CD4-positive, alpha-beta T cell (primary cell): ENCODE measurements at regions of chr14 and their contacts with region 1.

Region 1: DNA sequence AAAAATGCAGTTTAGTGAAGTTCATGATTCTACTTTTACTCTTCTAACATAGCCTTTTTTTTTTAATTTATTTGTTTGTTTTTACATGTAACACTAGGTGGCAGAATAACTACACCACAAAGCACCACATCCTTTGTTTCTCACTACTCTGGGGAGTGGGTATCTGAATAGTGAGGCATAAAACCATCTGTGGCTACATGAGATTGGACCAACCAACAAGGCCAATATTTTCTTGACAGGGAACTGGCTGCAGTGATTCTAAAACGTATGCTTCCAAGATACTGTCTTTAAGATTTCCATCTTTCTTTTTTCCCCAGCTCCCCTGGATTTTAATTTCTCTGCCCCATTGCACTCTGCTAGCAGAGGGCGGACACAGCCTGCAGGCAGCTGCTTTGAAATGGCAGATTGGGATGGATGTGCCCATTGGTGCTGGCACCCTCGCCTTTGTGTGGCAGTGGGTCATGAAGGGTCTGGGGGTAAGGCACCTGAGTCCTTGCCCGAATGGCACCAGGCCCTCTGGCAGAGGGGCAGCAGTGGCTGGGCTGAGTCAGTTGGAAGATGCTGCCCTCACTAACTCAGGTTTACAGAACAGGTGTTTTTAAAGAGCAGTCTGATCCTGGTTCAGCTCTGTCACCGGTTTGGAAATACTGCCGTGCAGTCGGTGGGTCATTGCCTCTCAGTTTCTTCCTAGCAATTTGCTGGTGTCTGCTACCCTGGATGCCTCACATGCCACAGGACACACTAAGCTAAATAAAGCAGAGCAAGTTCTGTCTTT is 429.1 kb downstream of the RAD51B start:
- DNase-seq: peak in 5 of 14 experiments; percentile 1 to 79 (median 69)
- ATAC-seq: peak; percentile 83
- H3K4me3 ChIP-seq: no peak overlapping the region
- H3K4me3 Mint-ChIP-seq: no peak overlapping the region
- H3K27ac ChIP-seq: no peak overlapping the region
- H3K27ac Mint-ChIP-seq: peak overlapping the region; percentile 67
- H3K4me1 ChIP-seq: peaks cover 6% of the 10 kb centered on the region
- H3K4me1 Mint-ChIP-seq: peaks cover 52% of the 10 kb centered on the region
- H3K27me3 ChIP-seq: no peaks in the 10 kb centered on the region
- H3K27me3 Mint-ChIP-seq: no peaks in the 10 kb centered on the region
- CTCF ChIP-seq: peak; percentile 77

Region 2: DNA sequence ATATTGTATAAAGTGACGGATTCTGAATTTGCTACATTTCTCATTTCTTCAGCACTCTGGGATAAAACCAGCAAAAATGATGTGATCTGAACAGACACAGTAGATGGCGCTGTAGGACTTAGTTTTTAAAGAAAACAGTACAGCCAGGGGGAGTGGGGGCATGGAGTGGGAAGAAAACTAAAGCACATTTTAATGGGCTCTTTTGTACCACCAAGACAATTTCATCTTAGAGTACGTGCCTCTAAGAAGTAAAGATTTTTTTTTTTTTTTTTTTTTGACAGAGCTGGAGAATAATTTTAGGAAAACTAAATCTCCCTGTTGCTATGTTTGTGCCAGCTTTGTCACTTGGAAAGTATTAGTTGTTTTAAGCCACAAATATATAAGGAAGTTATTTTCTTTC is 304.7 kb before region 1 on chr14:
- CTCF ChIA-PET with region 1: no interaction called
- POLR2A ChIA-PET with region 1: no interaction called
- intact Hi-C with region 1: loop called (anchors 5 kb)
- DNase-seq: peak in 11 of 14 experiments; percentile 7 to 78 (median 40)
- ATAC-seq: peak; percentile 66
- H3K4me3 ChIP-seq: no peak overlapping the region
- H3K4me3 Mint-ChIP-seq: no peak overlapping the region
- H3K27ac ChIP-seq: no peak overlapping the region
- H3K27ac Mint-ChIP-seq: no peak overlapping the region
- H3K4me1 ChIP-seq: no peaks in the 10 kb centered on the region
- H3K4me1 Mint-ChIP-seq: no peaks in the 10 kb centered on the region
- H3K27me3 ChIP-seq: no peaks in the 10 kb centered on the region
- H3K27me3 Mint-ChIP-seq: no peaks in the 10 kb centered on the region
- CTCF ChIP-seq: peak; percentile 70

Region 3: GRCh38 chr14:68359837-68360552 is 111.3 kb after region 1 on chr14:
- CTCF ChIA-PET with region 1: no interaction called
- POLR2A ChIA-PET with region 1: no interaction called
- intact Hi-C with region 1: loop called in 1 of 2 experiments (anchors 5 kb)
- DNase-seq: peak in 1 of 14 experiments; percentile 37
- ATAC-seq: no peak
- H3K4me3 ChIP-seq: no peak overlapping the region
- H3K4me3 Mint-ChIP-seq: no peak overlapping the region
- H3K27ac ChIP-seq: no peak overlapping the region
- H3K27ac Mint-ChIP-seq: peak overlapping the region; percentile 68
- H3K4me1 ChIP-seq: peaks cover 18% of the 10 kb centered on the region
- H3K4me1 Mint-ChIP-seq: peaks cover 45% of the 10 kb centered on the region
- H3K27me3 ChIP-seq: no peaks in the 10 kb centered on the region
- H3K27me3 Mint-ChIP-seq: no peaks in the 10 kb centered on the region
- CTCF ChIP-seq: no peak

Region 4: DNA sequence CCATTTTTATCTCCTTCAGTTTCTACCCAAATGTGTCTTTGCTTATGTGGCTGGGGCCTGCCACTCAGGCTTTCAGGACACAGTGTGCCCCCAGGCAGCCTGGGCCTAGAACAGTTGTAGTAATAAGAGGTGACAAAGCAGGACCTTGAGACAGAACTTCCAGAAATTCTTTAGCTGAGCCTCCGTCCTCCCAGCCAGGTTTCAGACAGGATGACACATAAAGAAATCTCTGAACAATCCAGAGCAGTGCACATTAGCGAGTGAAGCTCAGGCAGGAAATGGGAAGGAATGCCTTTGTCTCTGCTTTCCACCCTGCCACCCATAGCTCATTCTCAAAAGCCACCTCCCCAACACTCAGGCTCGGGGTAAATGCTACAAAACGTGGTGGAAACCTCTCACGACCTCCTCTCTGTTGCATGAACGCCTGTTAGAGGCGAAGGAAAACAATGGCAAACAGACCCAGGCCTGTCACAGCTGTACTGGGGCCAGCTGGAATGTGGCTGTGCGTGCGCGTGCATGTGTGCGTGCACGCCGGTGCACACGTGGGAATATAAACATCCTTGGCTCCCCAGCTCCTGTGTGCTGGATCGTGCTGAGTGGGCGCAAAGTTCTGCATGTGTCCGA is 257.5 kb after region 1 on chr14:
- CTCF ChIA-PET with region 1: interaction called, 3 read pairs
- POLR2A ChIA-PET with region 1: interaction called, 10 read pairs
- intact Hi-C with region 1: loop called (anchors 5 to 10 kb)
- DNase-seq: peak in 2 of 14 experiments; percentile 25 to 45
- ATAC-seq: no peak
- H3K4me3 ChIP-seq: peak overlapping the region; percentile 20
- H3K4me3 Mint-ChIP-seq: peak overlapping the region; percentile 50
- H3K27ac ChIP-seq: peak overlapping the region; percentile 64 to 90
- H3K27ac Mint-ChIP-seq: peak overlapping the region; percentile 95
- H3K4me1 ChIP-seq: peaks cover 64% of the 10 kb centered on the region
- H3K4me1 Mint-ChIP-seq: peaks cover 82% of the 10 kb centered on the region
- H3K27me3 ChIP-seq: no peaks in the 10 kb centered on the region
- H3K27me3 Mint-ChIP-seq: no peaks in the 10 kb centered on the region
- CTCF ChIP-seq: no peak

Region 5: DNA sequence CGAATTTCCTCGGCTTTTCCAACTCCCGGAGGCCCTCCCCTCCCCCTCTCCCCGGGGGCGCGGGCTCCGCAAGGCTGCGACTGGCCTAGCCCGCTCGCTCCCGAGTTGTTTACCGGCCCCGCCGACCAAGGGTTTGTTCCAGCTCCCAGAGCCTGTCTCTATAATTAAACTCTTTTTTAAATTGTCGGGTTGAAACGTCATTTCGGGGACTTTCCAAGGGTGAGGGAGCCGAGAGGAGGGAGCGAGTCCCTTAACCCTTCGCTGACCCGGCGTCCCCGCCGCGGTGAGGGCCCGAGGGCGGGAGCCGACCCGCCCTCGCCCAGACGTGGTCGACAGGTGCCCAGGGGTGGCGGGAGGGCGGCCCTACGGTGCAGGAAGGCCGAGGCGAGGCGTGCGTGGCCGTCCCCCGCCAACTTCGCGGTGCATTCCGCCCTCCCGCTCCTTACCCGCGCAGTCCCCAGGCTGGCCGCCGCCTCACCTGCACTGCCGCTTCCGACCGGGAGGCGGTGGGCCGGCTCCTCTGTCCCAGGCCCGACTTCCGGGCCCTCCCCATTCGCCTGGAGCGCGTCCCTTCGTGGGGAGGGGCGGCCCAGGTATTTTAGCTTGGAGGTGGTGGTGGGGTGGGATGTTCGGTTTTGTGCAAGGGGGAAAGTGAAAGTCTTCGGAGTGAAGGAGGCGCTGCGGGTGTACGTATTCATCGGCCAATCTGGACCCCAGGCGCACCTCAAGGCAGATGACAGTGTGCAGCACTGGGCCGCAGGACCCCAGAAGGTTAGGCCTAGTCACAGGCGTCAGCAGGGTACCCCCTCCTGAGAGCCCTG is 547.1 kb after region 1 on chr14:
- CTCF ChIA-PET with region 1: interaction called, 21 read pairs
- POLR2A ChIA-PET with region 1: interaction called, 157 read pairs
- intact Hi-C with region 1: no loop called
- DNase-seq: peak; percentile 66 to 95 (median 80)
- ATAC-seq: peak; percentile 43
- H3K4me3 ChIP-seq: peak overlapping the region; percentile 98
- H3K4me3 Mint-ChIP-seq: peak overlapping the region; percentile 92
- H3K27ac ChIP-seq: peak overlapping the region; percentile 100
- H3K27ac Mint-ChIP-seq: peak overlapping the region; percentile 99
- H3K4me1 ChIP-seq: peaks cover 29% of the 10 kb centered on the region
- H3K4me1 Mint-ChIP-seq: peaks cover 49% of the 10 kb centered on the region
- H3K27me3 ChIP-seq: no peaks in the 10 kb centered on the region
- H3K27me3 Mint-ChIP-seq: no peaks in the 10 kb centered on the region
- CTCF ChIP-seq: peak; percentile 77

Region 6: DNA sequence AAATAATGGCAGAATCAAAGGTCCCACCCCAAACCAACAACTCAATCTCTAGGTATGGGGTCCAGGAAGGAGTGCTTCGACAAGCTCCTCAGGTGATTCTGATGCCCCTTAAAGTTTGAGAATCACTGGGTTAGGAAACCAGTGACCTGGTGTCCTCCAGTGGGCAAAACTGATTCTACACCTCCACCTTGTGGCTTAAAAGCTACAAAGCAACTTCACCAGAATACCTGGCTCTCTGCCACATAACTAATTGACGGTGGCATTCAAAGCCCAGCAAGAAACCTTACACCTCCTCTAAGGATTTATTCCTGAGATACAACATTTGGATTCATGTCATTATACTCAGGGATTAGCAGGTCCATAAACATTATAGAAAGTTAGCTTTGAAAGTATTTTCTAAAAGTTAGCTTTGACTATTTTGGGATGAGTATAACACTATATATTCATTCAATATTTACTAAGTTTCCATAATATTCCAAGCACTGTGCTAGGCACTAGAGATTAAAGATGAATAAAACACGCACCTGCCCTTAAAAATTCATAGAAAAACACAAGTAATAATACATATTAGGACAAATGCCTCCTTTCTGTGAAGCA is 858.8 kb after region 1 on chr14:
- CTCF ChIA-PET with region 1: no interaction called
- POLR2A ChIA-PET with region 1: no interaction called
- intact Hi-C with region 1: loop called in 1 of 2 experiments (anchors 10 kb)
- DNase-seq: peak in 7 of 14 experiments; percentile 1 to 69 (median 41)
- ATAC-seq: peak; percentile 60
- H3K4me3 ChIP-seq: no peak overlapping the region
- H3K4me3 Mint-ChIP-seq: no peak overlapping the region
- H3K27ac ChIP-seq: no peak overlapping the region
- H3K27ac Mint-ChIP-seq: peak overlapping the region; percentile 55
- H3K4me1 ChIP-seq: no peaks in the 10 kb centered on the region
- H3K4me1 Mint-ChIP-seq: peaks cover 13% of the 10 kb centered on the region
- H3K27me3 ChIP-seq: no peaks in the 10 kb centered on the region
- H3K27me3 Mint-ChIP-seq: no peaks in the 10 kb centered on the region
- CTCF ChIP-seq: peak; percentile 61